Caco-2 (cell line): ENCODE measurements at regions of chr6 and their contacts with region 1.

Region 1: DNA sequence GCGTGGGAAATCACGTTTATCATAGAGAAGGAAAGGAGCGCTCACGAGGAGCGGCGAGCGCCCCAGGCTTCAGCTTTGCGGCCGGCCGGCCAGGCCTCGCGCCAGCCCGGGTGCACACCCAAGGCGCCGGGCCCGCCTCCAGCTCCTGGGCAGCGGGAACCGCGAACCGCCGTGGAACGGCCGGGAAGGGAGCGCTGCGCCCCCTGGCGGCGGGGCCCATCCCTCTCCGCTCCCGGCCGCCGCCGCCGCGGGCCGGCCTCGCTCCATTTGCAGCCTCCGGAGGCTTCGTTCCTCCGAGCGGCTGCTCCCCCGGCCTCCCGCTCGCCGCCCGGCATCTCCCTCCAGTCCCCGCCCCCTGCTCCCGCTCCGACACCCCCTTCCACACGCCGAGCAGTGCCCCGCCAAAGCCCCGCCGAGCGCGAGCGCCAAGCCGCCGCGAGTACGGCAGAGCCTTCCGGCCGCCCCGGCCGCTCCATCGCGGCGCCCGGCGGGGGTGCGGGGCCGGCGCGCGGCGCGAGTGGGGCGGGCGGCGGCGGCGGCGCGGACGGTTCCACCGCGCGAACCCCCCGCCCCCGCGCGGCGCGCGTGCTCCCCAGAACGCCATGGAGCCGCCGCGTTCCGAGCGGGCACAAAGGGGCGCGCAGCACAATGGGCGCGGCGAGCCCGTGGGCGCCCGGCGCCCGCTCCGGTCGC is 956 bp downstream of the BEND3 start:
- DNase-seq: peak; percentile 82 to 90
- H3K4me3 ChIP-seq: peak overlapping the region; percentile 84
- H3K4me3 Mint-ChIP-seq: peak overlapping the region; percentile 82
- H3K27ac Mint-ChIP-seq: peak overlapping the region; percentile 40
- H3K4me1 ChIP-seq: peaks cover 7% of the 10 kb centered on the region; the same call in 1 of the 2 replicates
- H3K4me1 Mint-ChIP-seq: peaks cover 6% of the 10 kb centered on the region
- H3K27me3 ChIP-seq: no peaks in the 10 kb centered on the region
- H3K27me3 Mint-ChIP-seq: no peaks in the 10 kb centered on the region
- CTCF ChIP-seq: peak; percentile 9 to 85

Region 2: DNA sequence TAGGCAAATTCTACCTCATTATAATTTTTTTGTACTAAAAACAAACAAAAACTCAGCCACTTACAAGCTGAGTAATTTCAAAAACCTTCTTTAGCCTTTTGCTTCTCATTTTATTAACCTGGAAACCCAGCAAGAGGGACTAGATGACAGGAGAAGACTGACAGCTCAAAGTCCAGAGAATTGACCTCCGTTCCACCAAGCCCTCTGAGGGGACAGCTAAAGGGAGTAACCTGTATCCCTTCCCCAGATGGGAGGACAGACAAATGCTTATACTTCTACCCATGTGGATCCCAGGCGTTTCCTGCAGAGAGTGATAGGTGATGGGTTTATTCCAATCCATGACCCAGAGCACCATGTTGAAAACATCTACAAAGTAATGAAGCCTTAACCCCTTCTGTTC is 104.9 kb before region 1 on chr6:
- CTCF ChIA-PET with region 1: no interaction called
- POLR2A ChIA-PET with region 1: no interaction called
- intact Hi-C with region 1: no loop called
- DNase-seq: no peak
- H3K4me3 ChIP-seq: no peak overlapping the region
- H3K4me3 Mint-ChIP-seq: no peak overlapping the region
- H3K27ac Mint-ChIP-seq: no peak overlapping the region
- H3K4me1 ChIP-seq: no peaks in the 10 kb centered on the region
- H3K4me1 Mint-ChIP-seq: no peaks in the 10 kb centered on the region
- H3K27me3 ChIP-seq: no peaks in the 10 kb centered on the region
- H3K27me3 Mint-ChIP-seq: no peaks in the 10 kb centered on the region
- CTCF ChIP-seq: no peak

Region 3: GRCh38 chr6:107033126-107033525 is 81.2 kb before region 1 on chr6:
- CTCF ChIA-PET with region 1: no interaction called
- POLR2A ChIA-PET with region 1: no interaction called
- intact Hi-C with region 1: loop called (anchors 1 kb)
- DNase-seq: no peak
- H3K4me3 ChIP-seq: no peak overlapping the region
- H3K4me3 Mint-ChIP-seq: no peak overlapping the region
- H3K27ac Mint-ChIP-seq: no peak overlapping the region
- H3K4me1 ChIP-seq: no peaks in the 10 kb centered on the region
- H3K4me1 Mint-ChIP-seq: no peaks in the 10 kb centered on the region
- H3K27me3 ChIP-seq: no peaks in the 10 kb centered on the region
- H3K27me3 Mint-ChIP-seq: no peaks in the 10 kb centered on the region
- CTCF ChIP-seq: no peak

Region 4: GRCh38 chr6:107075951-107076381 is 38.4 kb before region 1 on chr6:
- CTCF ChIA-PET with region 1: no interaction called
- POLR2A ChIA-PET with region 1: no interaction called
- intact Hi-C with region 1: loop called (anchors 2 kb)
- DNase-seq: no peak
- H3K4me3 ChIP-seq: no peak overlapping the region
- H3K4me3 Mint-ChIP-seq: no peak overlapping the region
- H3K27ac Mint-ChIP-seq: no peak overlapping the region
- H3K4me1 ChIP-seq: no peaks in the 10 kb centered on the region
- H3K4me1 Mint-ChIP-seq: no peaks in the 10 kb centered on the region
- H3K27me3 ChIP-seq: no peaks in the 10 kb centered on the region
- H3K27me3 Mint-ChIP-seq: no peaks in the 10 kb centered on the region
- CTCF ChIP-seq: no peak